Vagina (tissue), 2 donors: ENCODE measurements at regions of chr17 and their contacts with region 1.

Region 1: DNA sequence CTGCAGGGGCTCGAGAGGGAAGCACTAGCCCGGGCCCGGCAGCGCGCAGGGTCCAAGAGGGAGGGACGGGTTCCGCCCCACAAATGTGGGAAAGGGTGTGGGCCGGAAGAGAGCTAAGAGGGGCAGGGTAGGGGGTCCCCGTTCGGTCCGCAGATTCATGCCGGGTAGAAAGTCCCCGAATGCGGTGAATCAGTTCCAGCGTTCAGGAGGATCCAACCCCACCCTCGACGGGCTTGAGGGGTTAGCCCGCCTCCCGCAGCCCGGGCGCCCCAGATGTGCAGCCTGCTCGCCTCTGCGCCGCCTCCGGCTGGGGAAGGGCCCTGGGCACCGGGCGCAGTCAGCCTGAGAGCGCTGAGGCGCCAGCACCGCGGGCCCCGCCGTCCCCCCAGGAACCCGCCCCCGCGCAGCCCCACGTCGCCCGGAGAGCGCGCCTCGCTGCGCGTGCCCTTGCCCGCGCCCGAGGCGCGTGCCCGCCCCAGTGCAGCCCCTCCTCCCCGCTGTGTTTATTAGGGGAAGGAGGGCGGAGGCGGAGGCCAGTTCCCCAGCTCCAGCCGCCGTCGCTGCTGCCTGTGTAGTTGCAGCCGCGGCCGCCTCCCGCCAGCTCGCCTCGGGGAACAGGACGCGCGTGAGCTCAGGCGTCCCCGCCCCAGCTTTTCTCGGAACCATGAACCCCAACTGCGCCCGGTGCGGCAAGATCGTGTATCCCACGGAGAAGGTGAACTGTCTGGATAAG is at the start of gene LASP1:
- DNase-seq: no peak
- H3K4me3 ChIP-seq: peak within 1 kb of the TSS; percentile 91 to 96
- H3K27ac ChIP-seq: peak within 1 kb of the TSS; percentile 95
- H3K4me1 ChIP-seq: peaks cover 51% of the 10 kb centered on the region
- H3K27me3 ChIP-seq: no peaks in the 10 kb centered on the region
- CTCF ChIP-seq: peak in 1 of 3 experiments; percentile 8
- POLR2A ChIP-seq: peak in 1 of 2 donors; percentile 97
- total RNA-seq, gene LASP1: 69.0 TPM

Region 2: DNA sequence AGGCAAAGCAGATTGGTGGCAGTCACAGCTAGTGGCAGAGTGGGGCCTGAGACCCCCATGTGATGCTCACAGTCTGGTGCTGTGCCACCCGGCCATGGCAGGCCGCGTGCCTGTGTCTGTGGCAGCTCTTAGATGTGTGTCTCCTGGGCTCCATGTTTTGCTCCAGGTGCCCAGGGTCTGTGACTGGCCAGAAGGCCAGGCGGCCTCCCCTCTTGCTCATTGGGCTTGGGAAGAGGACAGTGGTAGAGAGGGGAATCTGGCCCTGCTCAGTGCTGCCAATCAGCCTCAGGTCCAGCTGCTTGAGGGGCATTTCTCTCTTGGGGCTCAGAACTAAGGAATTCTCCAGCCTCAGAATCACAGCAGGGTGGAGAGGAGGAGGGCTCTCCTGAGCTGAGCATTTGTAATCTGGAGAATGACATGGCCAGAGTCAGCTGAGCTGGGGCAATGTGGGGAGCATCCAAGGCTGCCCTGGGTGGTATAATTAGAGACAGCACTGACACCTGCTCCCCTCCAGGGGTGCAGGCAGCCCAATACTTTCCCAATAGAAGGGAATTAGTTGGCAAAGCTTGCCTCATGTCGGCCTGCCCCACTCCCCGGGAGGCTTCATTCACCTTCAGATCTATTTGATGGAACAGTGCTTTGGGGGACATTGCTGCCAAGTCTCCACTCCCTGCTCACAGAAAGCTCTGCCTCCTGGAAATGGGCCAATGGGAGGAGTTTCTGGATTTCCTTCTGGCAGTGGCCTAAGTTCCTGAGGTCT is 53.0 kb after region 1 on chr17:
- intact Hi-C with region 1: loop called (anchors 10 kb)
- DNase-seq: no peak
- H3K4me3 ChIP-seq: no peak overlapping the region
- H3K27ac ChIP-seq: peak overlapping the region; percentile 37
- H3K4me1 ChIP-seq: peaks cover 24% of the 10 kb centered on the region
- H3K27me3 ChIP-seq: no peaks in the 10 kb centered on the region
- CTCF ChIP-seq: no peak
- POLR2A ChIP-seq: no peak